Heart left ventricle (tissue), 16 donors: ENCODE measurements at regions of chr2 and their contacts with region 1.

Region 1: DNA sequence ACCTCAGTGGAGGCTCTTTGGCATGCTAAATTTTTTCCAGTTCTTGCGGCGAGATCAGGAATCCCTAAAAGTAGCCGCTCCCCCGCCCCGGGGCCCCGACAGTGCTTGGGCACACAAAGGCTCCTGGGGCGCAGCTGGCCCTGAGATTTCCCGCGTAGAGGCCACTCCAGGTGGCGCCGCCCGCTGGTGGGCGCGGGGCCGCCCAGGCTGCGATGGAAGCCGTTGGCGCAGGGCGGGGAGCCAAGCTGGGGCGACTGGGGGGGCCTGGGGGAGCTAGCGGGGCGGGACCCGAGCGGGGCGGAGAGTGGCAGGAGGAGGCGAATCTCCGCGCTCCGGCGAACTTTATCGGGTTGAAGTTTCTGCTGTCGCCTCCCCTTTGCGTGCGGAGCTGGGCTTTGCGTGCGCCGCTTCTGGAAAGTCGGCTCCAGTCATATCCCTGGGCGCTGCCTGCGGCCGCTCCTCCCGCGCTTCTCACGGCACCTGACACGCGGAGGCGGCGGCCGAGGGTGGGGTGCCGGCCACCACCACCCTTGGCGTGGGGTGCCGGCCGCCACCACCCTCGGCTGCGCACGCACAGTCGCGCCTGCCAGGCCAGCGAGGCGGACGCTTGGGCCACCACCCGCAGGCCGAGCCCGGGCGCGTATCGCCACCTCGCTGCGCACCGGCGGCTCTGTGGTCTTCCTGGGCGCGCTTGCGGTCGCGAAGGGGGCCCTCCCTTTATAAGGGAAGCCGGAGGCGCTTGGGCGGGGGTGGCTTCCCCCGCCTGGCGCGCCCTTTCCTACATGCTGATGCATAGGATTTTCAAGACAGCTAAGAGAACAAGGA is 867 bp upstream of the CYP1B1 start:
- DNase-seq: peak; percentile 81 to 89 (median 83)
- ATAC-seq: peak; percentile 33 to 79 (median 72)
- H3K4me3 ChIP-seq: peak overlapping the region; percentile 30 to 77 (median 65)
- H3K27ac ChIP-seq: peak overlapping the region; percentile 78 to 97 (median 93)
- H3K4me1 ChIP-seq: peaks cover 0 to 52% (median 22%) of the 10 kb centered on the region in 12 donors
- H3K27me3 ChIP-seq: peaks cover 0 to 55% (median 32%) of the 10 kb centered on the region in 9 donors
- CTCF ChIP-seq: peak; percentile 17 to 60 (median 34)
- POLR2A ChIP-seq: peak in 1 of 2 donors; percentile 69

Region 2: GRCh38 chr2:37168217-37168981 is 908.4 kb before region 1 on chr2:
- intact Hi-C with region 1: no loop called
- DNase-seq: no peak
- ATAC-seq: peak in 3 of 4 donors; percentile 59 to 83 (median 66)
- H3K4me3 ChIP-seq: no peak overlapping the region
- H3K27ac ChIP-seq: no peak overlapping the region
- H3K4me1 ChIP-seq: no peaks in the 10 kb centered on the region
- H3K27me3 ChIP-seq: no peaks in the 10 kb centered on the region
- CTCF ChIP-seq: peak; percentile 48 to 74 (median 65)
- POLR2A ChIP-seq: no peak

Region 3: GRCh38 chr2:37653805-37654378 is 422.9 kb before region 1 on chr2:
- intact Hi-C with region 1: no loop called
- DNase-seq: peak; percentile 70 to 89 (median 79)
- ATAC-seq: peak; percentile 74 to 87 (median 79)
- H3K4me3 ChIP-seq: peak overlapping the region in 9 of 12 donors; percentile 1 to 38 (median 19)
- H3K27ac ChIP-seq: peak overlapping the region; percentile 76 to 95 (median 90)
- H3K4me1 ChIP-seq: peaks cover 28 to 98% (median 90%) of the 10 kb centered on the region in 12 donors
- H3K27me3 ChIP-seq: no peaks in the 10 kb centered on the region
- CTCF ChIP-seq: no peak
- POLR2A ChIP-seq: peak in 1 of 2 donors; percentile 34

Region 4: GRCh38 chr2:38095996-38096861 is 19.4 kb after region 1 on chr2:
- intact Hi-C with region 1: loop called in 1 of 10 experiments (anchors 2 kb)
- DNase-seq: peak; percentile 73 to 85 (median 82)
- ATAC-seq: peak; percentile 45 to 82 (median 59)
- H3K4me3 ChIP-seq: no peak overlapping the region
- H3K27ac ChIP-seq: peak overlapping the region; percentile 29 to 91 (median 76)
- H3K4me1 ChIP-seq: peaks cover 0 to 85% (median 67%) of the 10 kb centered on the region in 12 donors
- H3K27me3 ChIP-seq: peaks cover 0 to 10% (median 0%) of the 10 kb centered on the region in 9 donors
- CTCF ChIP-seq: no peak
- POLR2A ChIP-seq: no peak